ENCODE measurements at regions of chr17 and their contacts with region 1.

Region 1: DNA sequence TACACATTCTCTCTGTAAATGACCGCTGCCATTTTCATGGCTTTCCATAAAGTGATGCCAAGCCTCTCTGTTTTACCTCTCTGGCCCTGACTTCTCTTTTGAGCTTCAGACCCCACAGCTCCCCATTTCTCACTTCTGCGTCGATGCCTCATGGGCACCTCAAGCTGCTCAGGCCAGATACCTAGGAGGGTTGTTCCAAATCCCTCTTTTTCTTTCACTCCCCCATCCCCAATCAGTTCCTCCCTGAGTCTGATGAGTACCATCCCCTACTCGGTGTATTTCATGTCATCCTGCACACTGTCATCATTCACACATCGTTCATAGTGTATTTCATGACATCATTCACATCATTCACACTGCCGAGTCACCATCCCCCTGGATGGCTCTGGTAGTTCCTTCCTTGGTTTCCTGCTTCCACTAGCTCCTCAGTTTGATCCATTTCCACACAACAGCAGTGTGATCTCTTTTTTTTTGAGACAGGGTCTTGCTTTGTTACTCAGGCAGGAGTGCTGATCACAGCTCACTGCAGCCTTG is 43.1 kb downstream of the NTN1 start:
- DNase-seq: peak in 1 of 2 donors; percentile 52
- H3K4me3 ChIP-seq: no peak overlapping the region
- CTCF ChIP-seq: no peak
- POLR2A ChIP-seq: no peak

Region 2: GRCh38 chr17:9098257-9098825 is 34.0 kb after region 1 on chr17:
- intact Hi-C with region 1: no loop called
- DNase-seq: no peak
- H3K4me3 ChIP-seq: no peak overlapping the region
- CTCF ChIP-seq: no peak
- POLR2A ChIP-seq: no peak

Region 3: GRCh38 chr17:9115446-9116191 is 51.2 kb after region 1 on chr17:
- intact Hi-C with region 1: loop called (anchors 10 kb)
- DNase-seq: peak; percentile 61 to 92
- H3K4me3 ChIP-seq: no peak overlapping the region
- CTCF ChIP-seq: no peak
- POLR2A ChIP-seq: no peak

Region 4: GRCh38 chr17:9324864-9325263 is 260.5 kb after region 1 on chr17:
- intact Hi-C with region 1: no loop called
- DNase-seq: peak in 1 of 2 donors; percentile 39
- H3K4me3 ChIP-seq: no peak overlapping the region
- CTCF ChIP-seq: no peak
- POLR2A ChIP-seq: no peak